Breast epithelium (tissue), 4 donors: ENCODE measurements at regions of chr4 and their contacts with region 1.

Region 1: DNA sequence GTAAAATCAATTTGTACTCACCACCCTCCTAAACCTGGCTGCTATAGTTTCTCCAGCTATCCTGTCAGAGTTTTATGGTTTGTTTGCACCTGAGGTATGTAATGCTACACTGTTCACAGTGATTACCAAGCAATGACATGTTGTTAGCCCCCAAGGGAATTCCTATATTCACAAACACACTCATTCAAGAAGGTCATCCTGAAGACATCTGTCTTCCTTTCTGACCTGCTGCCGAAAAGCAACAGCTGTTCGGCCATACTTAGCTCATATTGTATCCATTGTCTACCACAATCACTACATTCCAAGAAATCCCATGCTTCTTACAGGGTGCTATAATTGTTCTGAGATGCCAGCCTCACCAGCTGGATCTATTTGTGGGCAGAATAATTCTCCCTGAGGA is 160.1 kb upstream of the GYPA start:
- DNase-seq: no peak
- H3K4me3 ChIP-seq: no peak overlapping the region
- H3K27ac ChIP-seq: no peak overlapping the region
- H3K4me1 ChIP-seq: no peaks in the 10 kb centered on the region
- H3K27me3 ChIP-seq: no peaks in the 10 kb centered on the region
- CTCF ChIP-seq: no peak
- POLR2A ChIP-seq: no peak

Region 2: GRCh38 chr4:144868309-144868708 is 567.7 kb after region 1 on chr4:
- intact Hi-C with region 1: loop called (anchors 5 kb)
- DNase-seq: no peak
- H3K4me3 ChIP-seq: no peak overlapping the region
- H3K27ac ChIP-seq: no peak overlapping the region
- H3K4me1 ChIP-seq: no peaks in the 10 kb centered on the region
- H3K27me3 ChIP-seq: no peaks in the 10 kb centered on the region
- CTCF ChIP-seq: no peak
- POLR2A ChIP-seq: no peak